ENCODE measurements at regions of chr2 and their contacts with region 1.

Region 1: DNA sequence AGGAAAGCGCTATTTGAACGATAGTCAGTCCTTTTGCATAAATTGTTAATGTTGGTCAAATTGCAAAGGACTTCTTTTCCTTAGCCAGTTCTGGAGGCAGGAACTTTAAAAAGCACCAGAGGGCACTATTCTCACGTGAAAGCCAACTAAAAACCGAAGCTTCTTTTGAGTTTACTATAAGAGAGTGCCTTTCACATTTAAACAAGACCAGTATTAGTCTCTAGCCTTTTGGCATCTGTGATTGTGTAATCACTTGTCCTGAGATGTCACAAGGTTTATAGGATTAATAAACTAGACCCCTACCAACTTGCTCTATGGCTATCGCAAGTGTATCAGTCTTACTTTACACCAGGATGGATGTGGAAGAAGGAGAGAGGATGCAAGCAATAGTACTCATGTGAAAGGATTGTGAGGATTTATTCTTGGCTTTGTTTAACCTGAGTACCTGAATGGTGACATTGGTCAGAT is 14.4 kb upstream of the STAT4 start:
- DNase-seq: peak; percentile 42
- ATAC-seq: peak; percentile 76
- H3K4me3 Mint-ChIP-seq: no peak overlapping the region
- H3K27ac Mint-ChIP-seq: peak overlapping the region; percentile 52
- H3K4me1 Mint-ChIP-seq: peaks cover 22% of the 10 kb centered on the region
- H3K27me3 Mint-ChIP-seq: peaks cover 8% of the 10 kb centered on the region

Region 2: DNA sequence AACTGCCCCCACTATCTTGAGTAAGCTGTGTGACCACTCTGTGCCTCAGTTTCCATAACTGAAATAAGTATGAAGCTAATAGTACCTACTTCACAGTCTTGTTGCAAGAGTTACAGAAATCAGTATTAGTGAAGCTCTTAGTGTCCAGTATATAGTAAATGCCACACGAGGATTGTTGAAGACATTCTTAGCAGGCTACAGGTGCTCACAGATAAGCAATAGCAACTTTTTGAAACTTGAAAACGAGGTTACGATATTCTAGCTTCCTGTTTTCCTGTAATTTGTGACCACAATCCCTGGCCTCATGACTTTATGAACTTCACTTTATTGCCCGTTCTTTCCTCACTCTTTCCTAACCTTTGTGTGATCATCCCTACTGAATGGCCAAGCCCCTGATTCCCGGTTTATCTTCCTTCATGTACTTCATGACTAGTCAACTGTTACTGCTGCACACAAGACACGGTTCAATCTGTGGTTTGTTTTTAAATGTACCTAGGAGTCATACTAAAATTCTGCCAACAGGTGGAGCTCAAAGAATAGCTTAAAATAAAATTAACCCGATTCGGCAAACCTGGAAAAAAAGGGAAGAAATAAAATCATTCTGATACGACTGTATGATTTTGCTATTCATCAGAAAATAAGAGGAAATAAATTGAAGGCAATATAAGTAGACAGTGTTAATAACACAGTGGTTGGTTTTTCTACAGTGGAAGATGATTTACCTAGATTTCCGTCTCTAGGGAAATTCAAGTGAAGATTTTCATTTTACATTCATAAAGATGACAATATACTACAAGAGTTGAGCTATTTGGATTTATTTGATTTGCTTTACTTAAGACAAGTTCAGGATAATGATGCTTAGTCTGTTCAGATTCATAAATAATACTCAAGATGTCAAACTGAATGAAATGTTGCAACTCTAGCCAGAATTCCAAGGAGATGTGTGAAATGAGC is 113.1 kb before region 1 on chr2:
- CTCF ChIA-PET with region 1: interaction called, 51 read pairs
- POLR2A ChIA-PET with region 1: interaction called, 3 read pairs
- intact Hi-C with region 1: no loop called
- DNase-seq: peak; percentile 26
- ATAC-seq: peak; percentile 71
- H3K4me3 Mint-ChIP-seq: no peak overlapping the region
- H3K27ac Mint-ChIP-seq: no peak overlapping the region
- H3K4me1 Mint-ChIP-seq: peaks cover 15% of the 10 kb centered on the region
- H3K27me3 Mint-ChIP-seq: no peaks in the 10 kb centered on the region

Region 3: GRCh38 chr2:191078165-191078867 is 86.9 kb before region 1 on chr2:
- CTCF ChIA-PET with region 1: no interaction called
- POLR2A ChIA-PET with region 1: no interaction called
- intact Hi-C with region 1: no loop called
- DNase-seq: no peak
- ATAC-seq: peak; percentile 81
- H3K4me3 Mint-ChIP-seq: peak overlapping the region; percentile 64
- H3K27ac Mint-ChIP-seq: peak overlapping the region; percentile 83
- H3K4me1 Mint-ChIP-seq: peaks cover 20% of the 10 kb centered on the region
- H3K27me3 Mint-ChIP-seq: no peaks in the 10 kb centered on the region

Region 4: GRCh38 chr2:191218292-191218898 is 53.2 kb after region 1 on chr2:
- CTCF ChIA-PET with region 1: interaction called, 24 read pairs
- POLR2A ChIA-PET with region 1: no interaction called
- intact Hi-C with region 1: loop called in 1 of 2 experiments (anchors 2 kb)
- DNase-seq: peak; percentile 69
- ATAC-seq: peak; percentile 62
- H3K4me3 Mint-ChIP-seq: no peak overlapping the region
- H3K27ac Mint-ChIP-seq: no peak overlapping the region
- H3K4me1 Mint-ChIP-seq: peaks cover 32% of the 10 kb centered on the region
- H3K27me3 Mint-ChIP-seq: no peaks in the 10 kb centered on the region

Region 5: DNA sequence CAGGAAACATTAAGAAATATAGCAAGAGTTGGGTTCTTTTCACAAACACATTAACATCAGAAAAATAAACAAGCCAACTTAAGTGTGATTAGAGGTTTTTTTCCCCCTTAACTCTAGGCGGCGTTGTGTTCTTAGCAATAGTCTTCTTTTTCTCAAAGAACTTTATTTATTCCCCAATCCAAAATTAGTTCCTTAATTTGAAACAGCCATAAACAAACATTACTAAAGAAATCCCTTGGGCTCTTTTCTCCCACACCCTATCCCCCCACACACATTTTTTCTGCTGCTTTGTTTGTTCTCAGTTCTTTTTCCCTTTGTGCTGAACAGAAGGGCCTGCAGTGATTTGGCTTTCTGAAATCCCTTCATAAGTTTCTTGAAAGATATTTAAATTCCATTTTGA is 66.8 kb after region 1 on chr2:
- CTCF ChIA-PET with region 1: no interaction called
- POLR2A ChIA-PET with region 1: no interaction called
- intact Hi-C with region 1: no loop called
- DNase-seq: no peak
- ATAC-seq: no peak
- H3K4me3 Mint-ChIP-seq: no peak overlapping the region
- H3K27ac Mint-ChIP-seq: no peak overlapping the region
- H3K4me1 Mint-ChIP-seq: no peaks in the 10 kb centered on the region
- H3K27me3 Mint-ChIP-seq: no peaks in the 10 kb centered on the region

Region 6: DNA sequence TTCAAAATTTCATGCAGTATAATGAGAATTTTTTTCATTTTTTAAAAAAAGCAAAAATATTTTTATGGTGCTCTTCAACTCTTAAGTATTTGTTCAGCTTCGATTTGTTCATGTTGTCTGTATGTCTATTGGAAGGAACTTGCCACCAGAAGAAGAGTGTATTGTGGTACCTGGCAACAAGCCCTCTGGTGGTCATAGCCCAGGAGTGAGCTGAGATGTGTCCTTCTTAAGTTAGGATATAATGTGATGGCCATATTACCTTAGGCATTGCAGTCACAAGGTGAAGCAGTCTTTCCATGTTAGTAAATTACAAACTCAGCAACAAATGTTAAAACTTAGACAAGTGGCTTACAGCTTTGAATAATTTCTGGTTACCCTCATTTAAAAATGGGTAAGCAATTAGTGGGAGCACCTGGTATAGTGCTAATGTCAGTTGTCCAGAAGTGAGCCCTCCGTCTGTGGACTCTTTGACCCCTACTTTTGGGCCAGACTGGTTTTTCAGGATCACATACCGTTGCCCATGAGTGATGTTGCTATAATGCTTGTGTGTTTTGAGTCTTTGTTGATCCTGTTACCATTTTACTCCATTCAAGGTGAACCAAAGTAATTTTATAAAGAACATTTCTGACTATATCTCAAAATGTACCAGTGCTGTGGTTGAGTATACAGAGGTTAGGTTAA is 137.4 kb after region 1 on chr2:
- CTCF ChIA-PET with region 1: interaction called, 3 read pairs
- POLR2A ChIA-PET with region 1: no interaction called
- intact Hi-C with region 1: loop called (anchors 2 to 10 kb)
- DNase-seq: peak; percentile 23
- ATAC-seq: no peak
- H3K4me3 Mint-ChIP-seq: no peak overlapping the region
- H3K27ac Mint-ChIP-seq: no peak overlapping the region
- H3K4me1 Mint-ChIP-seq: no peaks in the 10 kb centered on the region
- H3K27me3 Mint-ChIP-seq: no peaks in the 10 kb centered on the region

Region 7: GRCh38 chr2:191386938-191387536 is 221.8 kb after region 1 on chr2:
- CTCF ChIA-PET with region 1: no interaction called
- POLR2A ChIA-PET with region 1: no interaction called
- intact Hi-C with region 1: loop called in 1 of 2 experiments (anchors 5 kb)
- DNase-seq: no peak
- ATAC-seq: peak; percentile 47
- H3K4me3 Mint-ChIP-seq: no peak overlapping the region
- H3K27ac Mint-ChIP-seq: no peak overlapping the region
- H3K4me1 Mint-ChIP-seq: peaks cover 14% of the 10 kb centered on the region
- H3K27me3 Mint-ChIP-seq: peaks cover 2% of the 10 kb centered on the region

Region 8: GRCh38 chr2:191465766-191466420 is 300.7 kb after region 1 on chr2:
- CTCF ChIA-PET with region 1: no interaction called
- POLR2A ChIA-PET with region 1: no interaction called
- intact Hi-C with region 1: no loop called
- DNase-seq: no peak
- ATAC-seq: no peak
- H3K4me3 Mint-ChIP-seq: no peak overlapping the region
- H3K27ac Mint-ChIP-seq: no peak overlapping the region
- H3K4me1 Mint-ChIP-seq: no peaks in the 10 kb centered on the region
- H3K27me3 Mint-ChIP-seq: no peaks in the 10 kb centered on the region

Region 9: GRCh38 chr2:191515551-191515950 is 350.3 kb after region 1 on chr2:
- CTCF ChIA-PET with region 1: interaction called, 83 read pairs
- POLR2A ChIA-PET with region 1: no interaction called
- intact Hi-C with region 1: no loop called
- DNase-seq: no peak
- ATAC-seq: no peak
- H3K4me3 Mint-ChIP-seq: no peak overlapping the region
- H3K27ac Mint-ChIP-seq: no peak overlapping the region
- H3K4me1 Mint-ChIP-seq: no peaks in the 10 kb centered on the region
- H3K27me3 Mint-ChIP-seq: peaks cover 6% of the 10 kb centered on the region

Region 10: DNA sequence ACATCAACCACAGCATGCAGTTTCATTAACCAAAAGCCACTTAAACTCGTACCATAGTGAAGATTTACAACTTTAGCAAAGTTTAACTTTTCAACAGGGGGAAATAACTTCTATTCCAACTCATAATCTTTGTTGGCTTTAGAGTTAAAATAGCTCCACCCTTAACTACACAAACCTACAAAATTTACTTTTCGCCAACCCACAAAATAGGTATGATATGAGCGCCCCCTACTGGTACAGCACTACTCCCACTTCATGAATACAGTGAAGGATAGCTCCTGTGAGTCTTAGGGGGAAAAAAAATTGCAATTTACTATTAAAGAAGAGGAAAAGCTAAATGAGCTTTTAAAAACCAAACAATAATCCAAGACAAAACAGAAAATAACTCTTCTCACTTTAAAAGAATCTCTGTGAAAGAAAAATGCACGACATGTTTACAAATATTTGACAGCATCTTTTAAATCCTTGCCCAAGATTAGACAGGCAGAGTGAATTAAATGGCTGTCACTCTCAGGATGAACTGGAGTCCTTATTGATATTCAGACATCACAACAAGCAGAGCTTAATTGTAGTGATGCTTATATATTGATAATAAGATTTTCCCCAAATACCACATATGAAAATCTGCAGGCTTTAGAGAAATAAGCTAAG is 997.3 kb after region 1 on chr2:
- CTCF ChIA-PET with region 1: interaction called, 5 read pairs
- POLR2A ChIA-PET with region 1: no interaction called
- intact Hi-C with region 1: loop called in 1 of 2 experiments (anchors 2 kb)
- DNase-seq: peak; percentile 80
- ATAC-seq: peak; percentile 74
- H3K4me3 Mint-ChIP-seq: no peak overlapping the region
- H3K27ac Mint-ChIP-seq: no peak overlapping the region
- H3K4me1 Mint-ChIP-seq: peaks cover 8% of the 10 kb centered on the region
- H3K27me3 Mint-ChIP-seq: peaks cover 9% of the 10 kb centered on the region

Measured in activated CD4-positive, alpha-beta T cell treated with anti-CD3 and anti-CD28 coated beads for 36 hours (primary cell).